CD14-positive monocyte (primary cell): ENCODE measurements at regions of chr7 and their contacts with region 1.

Region 1: DNA sequence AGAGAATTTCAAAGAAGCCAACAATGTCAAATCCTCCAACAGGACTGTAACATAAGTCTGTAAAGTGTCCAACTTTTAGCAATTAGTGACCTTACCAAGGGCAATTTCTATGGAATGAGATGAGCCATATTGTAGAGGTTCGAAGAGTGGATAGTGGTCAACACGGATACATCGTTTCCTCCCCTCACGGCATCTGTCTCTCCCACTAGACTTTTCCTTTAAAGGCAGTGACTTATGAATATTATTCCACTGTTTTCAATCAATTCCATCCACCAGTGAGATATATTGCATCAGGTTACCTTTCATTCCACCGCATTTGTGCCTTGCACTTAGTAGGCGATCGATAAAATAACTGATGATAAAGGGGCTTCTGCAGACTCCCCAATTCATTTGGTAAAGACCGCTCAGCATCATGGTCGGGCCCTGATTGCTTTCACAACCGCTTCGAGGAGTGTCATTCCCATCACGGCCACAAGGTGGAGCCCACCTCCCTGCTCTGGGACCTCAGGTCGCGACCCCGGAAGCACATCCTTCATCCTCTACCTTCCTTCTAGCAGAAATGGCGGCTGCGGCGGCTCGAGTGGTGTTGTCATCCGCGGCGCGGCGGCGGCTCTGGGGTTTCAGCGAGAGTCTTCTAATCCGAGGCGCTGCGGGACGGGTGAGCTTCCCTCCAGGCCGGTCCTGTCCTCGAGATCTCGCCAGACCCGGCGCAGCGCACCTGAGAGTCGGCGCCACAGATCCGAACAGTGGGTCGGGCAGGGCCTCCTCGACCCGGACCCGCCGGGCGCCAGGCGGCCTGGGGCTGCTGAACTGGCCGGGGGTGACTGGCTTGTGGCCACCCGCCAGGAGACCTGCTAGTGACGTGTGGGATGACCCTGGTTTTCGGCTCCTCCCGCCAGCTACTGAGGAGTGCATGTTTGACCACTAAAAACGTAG is at the start of gene PMPCB:
- DNase-seq: peak; percentile 88 to 92 (median 90)
- H3K4me3 ChIP-seq: peak within 1 kb of the TSS; percentile 80 to 85 (median 84)
- H3K4me3 Mint-ChIP-seq: peak within 1 kb of the TSS; percentile 81 to 83
- H3K27ac ChIP-seq: peak within 1 kb of the TSS; percentile 81 to 84
- H3K27ac Mint-ChIP-seq: peak within 1 kb of the TSS; percentile 85 to 96 (median 93)
- H3K4me1 ChIP-seq: peaks cover 11 to 15% of the 10 kb centered on the region in 2 donors
- H3K4me1 Mint-ChIP-seq: peaks cover 21% of the 10 kb centered on the region
- H3K27me3 ChIP-seq: no peaks in the 10 kb centered on the region
- H3K27me3 Mint-ChIP-seq: peaks cover 0 to 1% (median 1%) of the 10 kb centered on the region in 3 donors
- CTCF ChIP-seq: peak; percentile 95
- polyA plus RNA-seq, gene PMPCB: 42.8 to 50.8 (median 44.9) TPM

Region 2: GRCh38 chr7:103074519-103075336 is 222.4 kb before region 1 on chr7 and contains the starts of genes ARMC10 and FBXL13:
- intact Hi-C with region 1: loop called in 1 of 2 experiments (anchors 10 kb)
- DNase-seq: peak; percentile 91 to 93 (median 93)
- H3K4me3 ChIP-seq: peak within 1 kb of the TSS; percentile 71 to 89 (median 81)
- H3K4me3 Mint-ChIP-seq: peak within 1 kb of the TSS; percentile 93 to 98
- H3K27ac ChIP-seq: peak within 1 kb of the TSS; percentile 37 to 76
- H3K27ac Mint-ChIP-seq: peak within 1 kb of the TSS; percentile 79 to 97 (median 96)
- H3K4me1 ChIP-seq: peaks cover 34 to 45% of the 10 kb centered on the region in 2 donors
- H3K4me1 Mint-ChIP-seq: peaks cover 41% of the 10 kb centered on the region
- H3K27me3 ChIP-seq: no peaks in the 10 kb centered on the region
- H3K27me3 Mint-ChIP-seq: no peaks in the 10 kb centered on the region
- CTCF ChIP-seq: peak; percentile 66
- polyA plus RNA-seq, gene ARMC10: 15.4 to 60.1 (median 55.1) TPM
- polyA plus RNA-seq, gene FBXL13: 0.05 TPM in 1 of 3 donors, not detected in the others

Region 3: GRCh38 chr7:103344453-103345149 is 47.4 kb after region 1 on chr7 and contains the start of gene DNAJC2:
- intact Hi-C with region 1: loop called in 1 of 2 experiments (anchors 5 kb)
- DNase-seq: peak; percentile 86 to 89 (median 88)
- H3K4me3 ChIP-seq: peak within 1 kb of the TSS; percentile 78 to 98 (median 90)
- H3K4me3 Mint-ChIP-seq: peak within 1 kb of the TSS; percentile 96 to 98
- H3K27ac ChIP-seq: peak within 1 kb of the TSS; percentile 88 to 95
- H3K27ac Mint-ChIP-seq: peak within 1 kb of the TSS; percentile 93 to 97 (median 95)
- H3K4me1 ChIP-seq: peaks cover 33 to 55% of the 10 kb centered on the region in 2 donors
- H3K4me1 Mint-ChIP-seq: peaks cover 52% of the 10 kb centered on the region
- H3K27me3 ChIP-seq: no peaks in the 10 kb centered on the region
- H3K27me3 Mint-ChIP-seq: no peaks in the 10 kb centered on the region
- CTCF ChIP-seq: no peak
- polyA plus RNA-seq, gene DNAJC2: 5.6 to 18.6 (median 8.8) TPM

Region 4: GRCh38 chr7:103413407-103413806 is 116.2 kb after region 1 on chr7:
- intact Hi-C with region 1: loop called (anchors 5 kb)
- DNase-seq: no peak
- H3K4me3 ChIP-seq: no peak overlapping the region
- H3K4me3 Mint-ChIP-seq: no peak overlapping the region
- H3K27ac ChIP-seq: no peak overlapping the region
- H3K27ac Mint-ChIP-seq: no peak overlapping the region
- H3K4me1 ChIP-seq: no peaks in the 10 kb centered on the region
- H3K4me1 Mint-ChIP-seq: peaks cover 4% of the 10 kb centered on the region
- H3K27me3 ChIP-seq: no peaks in the 10 kb centered on the region
- H3K27me3 Mint-ChIP-seq: peaks cover 6 to 16% (median 13%) of the 10 kb centered on the region in 3 donors
- CTCF ChIP-seq: no peak